Left cardiac atrium (tissue), 4 donors: ENCODE measurements at regions of chr1 and their contacts with region 1.

Region 1: DNA sequence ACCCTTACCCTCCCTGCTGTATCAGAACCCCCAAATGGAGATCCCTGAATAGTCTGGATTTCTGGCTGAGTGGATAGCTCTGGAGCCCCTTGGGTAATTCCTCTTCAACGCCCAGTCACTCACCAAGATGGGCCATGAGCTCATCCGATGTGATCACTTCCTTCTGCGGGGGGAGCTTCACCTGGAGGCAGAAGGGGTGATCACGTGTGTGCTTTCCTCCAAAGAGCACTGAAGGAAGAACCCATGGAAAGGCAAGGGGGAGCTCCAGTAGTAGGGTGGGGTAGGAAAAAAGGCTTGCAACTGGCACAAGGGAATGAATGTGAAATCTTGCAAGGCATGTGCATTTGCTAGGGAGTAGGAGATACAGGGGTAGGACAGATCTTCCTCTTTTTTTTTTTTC is 5.1 kb downstream of the MINDY1 start:
- DNase-seq: no peak
- ATAC-seq: no peak

Region 2: DNA sequence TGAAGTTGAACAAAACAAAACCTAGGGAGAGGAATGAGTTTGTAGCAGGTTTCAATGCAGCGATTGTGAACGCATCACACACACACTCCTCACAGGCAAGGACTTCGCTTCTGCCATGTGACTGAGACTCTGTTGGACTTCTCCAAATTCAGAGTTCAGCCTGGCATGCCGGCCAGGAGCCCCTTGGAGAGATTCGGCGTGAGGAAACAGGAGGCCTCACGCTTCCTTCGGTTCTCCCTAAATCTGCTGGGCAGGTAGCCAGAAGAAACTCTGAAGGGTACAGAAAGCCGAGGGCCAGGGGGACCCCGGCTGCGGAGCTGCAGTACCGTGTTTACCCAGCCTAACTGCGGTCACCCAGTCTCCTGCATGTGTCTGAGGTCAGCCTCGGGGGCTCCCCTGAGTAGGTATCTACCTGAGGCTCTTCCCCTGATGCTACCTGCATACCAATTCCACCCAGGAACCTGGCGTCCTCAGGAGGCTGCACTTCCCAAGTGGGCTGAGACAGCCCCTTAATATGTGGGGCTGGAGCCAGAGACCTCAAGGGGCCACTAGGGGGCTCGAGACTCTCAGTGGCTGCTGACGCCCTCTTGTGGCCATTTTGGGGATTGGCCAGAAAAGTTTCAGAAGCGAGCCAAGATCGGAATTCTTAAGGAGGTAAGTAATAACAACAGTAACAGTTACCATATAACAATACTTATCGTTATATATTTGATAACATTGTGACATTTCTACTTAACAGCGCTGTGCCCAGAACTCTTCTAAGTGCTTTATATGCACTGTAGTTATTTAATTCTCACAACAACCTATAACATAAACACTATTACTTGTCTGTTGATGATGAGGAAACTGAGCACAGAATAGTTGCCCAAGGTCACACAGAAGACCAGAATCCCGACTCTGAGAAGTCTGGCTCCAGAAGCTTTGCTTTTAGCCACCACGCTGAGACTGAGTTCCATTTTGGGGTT is 22.2 kb before region 1 on chr1:
- intact Hi-C with region 1: loop called in 1 of 2 experiments (anchors 2 kb)
- DNase-seq: peak; percentile 89
- ATAC-seq: peak; percentile 27 to 38

Region 3: GRCh38 chr1:150987924-150988323 is 13.7 kb before region 1 on chr1:
- intact Hi-C with region 1: loop called in 1 of 2 experiments (anchors 1 kb)
- DNase-seq: no peak
- ATAC-seq: no peak